Activated B cell treated with CpG ODN at 0.5 μM for 24 hours (primary cell): ENCODE measurements at regions of chr10 and their contacts with region 1.

Region 1: DNA sequence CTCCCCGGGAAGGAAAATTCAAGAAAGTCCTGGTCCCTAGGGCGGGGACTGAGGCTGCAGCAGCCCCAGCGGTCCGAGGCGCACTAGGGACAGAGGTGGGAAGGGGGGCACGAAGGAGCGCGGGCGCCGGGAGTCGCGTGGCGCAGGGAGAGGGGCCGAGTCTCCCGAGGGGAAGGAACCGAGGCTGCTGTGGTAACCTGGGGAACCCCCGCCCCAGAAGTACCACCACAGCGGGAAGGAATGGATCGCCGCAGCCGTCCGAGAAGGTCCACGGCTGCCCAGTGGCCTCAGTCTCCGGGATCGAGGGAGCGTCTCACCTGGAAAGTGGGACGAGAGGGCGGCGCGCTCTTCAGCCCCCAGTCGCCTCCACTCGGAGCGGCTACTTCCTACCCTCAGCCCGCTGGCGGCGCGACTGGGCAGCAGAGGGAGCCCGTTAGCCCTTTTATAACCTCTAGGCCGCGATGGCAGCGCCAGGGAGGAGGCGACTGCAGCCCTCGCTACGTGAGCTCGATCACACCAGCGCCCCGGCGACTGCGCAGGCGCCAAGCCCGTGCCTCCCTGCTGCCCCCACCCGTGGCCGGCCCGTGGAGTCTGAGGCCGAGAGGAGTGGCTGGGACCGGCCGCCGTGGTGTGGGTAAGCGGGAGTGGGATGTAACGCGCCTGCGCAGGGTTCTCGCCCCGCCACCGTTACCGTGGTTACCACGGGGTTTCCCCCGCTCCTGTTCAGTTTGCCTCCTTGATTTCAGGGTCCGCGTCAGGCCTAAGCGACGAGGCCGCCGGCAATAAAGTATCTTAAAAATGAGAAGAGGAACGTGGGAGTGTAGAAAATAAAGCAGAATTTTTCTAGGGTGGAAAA is at the start of gene P4HA1:
- DNase-seq: peak; percentile 95
- ATAC-seq: peak; percentile 92
- H3K4me3 Mint-ChIP-seq: peak within 1 kb of the TSS; percentile 96
- H3K27ac Mint-ChIP-seq: peak within 1 kb of the TSS; percentile 88
- H3K4me1 Mint-ChIP-seq: peaks cover 30% of the 10 kb centered on the region
- H3K27me3 Mint-ChIP-seq: no peaks in the 10 kb centered on the region
- CTCF ChIP-seq: peak; percentile 23
- total RNA-seq, gene P4HA1: 19.8 and 20.5 TPM in 2 replicates

Region 2: GRCh38 chr10:72692057-72692910 is 404.4 kb before region 1 on chr10 and contains the start of gene MCU:
- CTCF ChIA-PET with region 1: no interaction called
- POLR2A ChIA-PET with region 1: no interaction called
- intact Hi-C with region 1: loop called (anchors 1 kb)
- DNase-seq: peak; percentile 90
- ATAC-seq: peak; percentile 96
- H3K4me3 Mint-ChIP-seq: peak within 1 kb of the TSS; percentile 90
- H3K27ac Mint-ChIP-seq: peak within 1 kb of the TSS; percentile 81
- H3K4me1 Mint-ChIP-seq: peaks cover 44% of the 10 kb centered on the region
- H3K27me3 Mint-ChIP-seq: no peaks in the 10 kb centered on the region
- CTCF ChIP-seq: no peak
- total RNA-seq, gene MCU: 13.8 and 15.5 TPM in 2 replicates

Region 3: DNA sequence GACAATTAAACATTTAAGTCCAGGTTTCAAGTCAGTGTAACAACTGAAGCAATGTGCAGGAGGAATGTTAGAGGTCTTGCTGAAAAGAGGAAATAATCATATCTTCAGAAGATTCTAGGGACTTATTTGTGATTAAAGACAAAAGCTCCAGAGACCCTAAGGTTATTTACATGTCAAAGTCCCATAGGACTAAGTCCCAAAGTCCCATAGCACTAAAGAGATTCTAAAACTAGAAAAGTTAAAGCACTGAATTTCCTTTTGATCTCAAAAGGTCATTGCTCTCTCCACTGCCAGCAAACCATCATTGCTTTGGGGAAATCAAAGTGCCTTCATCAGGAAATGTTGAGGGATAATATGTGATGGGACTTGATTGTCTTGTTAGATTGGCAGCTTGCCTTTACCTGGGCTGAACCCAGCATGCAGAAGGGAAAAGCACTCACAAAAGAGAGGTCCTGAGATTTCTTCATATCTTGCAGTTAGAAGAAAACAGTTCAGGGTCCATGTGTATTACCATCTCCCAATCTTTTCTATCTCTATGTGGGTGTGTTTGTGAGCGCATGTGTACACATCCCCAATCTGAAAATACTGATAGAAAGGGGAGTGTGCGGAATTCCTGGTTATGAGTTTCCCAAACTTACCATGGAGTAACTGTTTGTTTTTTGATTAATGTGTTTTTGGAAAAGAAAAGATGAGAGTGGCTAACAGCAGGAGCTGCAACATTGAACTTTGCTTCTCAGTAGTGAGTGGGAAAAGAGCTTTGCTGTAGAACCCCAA is 35.4 kb after region 1 on chr10:
- CTCF ChIA-PET with region 1: interaction called, 4 read pairs
- POLR2A ChIA-PET with region 1: interaction called, 22 read pairs
- intact Hi-C with region 1: loop called (anchors 1 kb)
- DNase-seq: no peak
- ATAC-seq: peak; percentile 78
- H3K4me3 Mint-ChIP-seq: peak overlapping the region; percentile 68
- H3K27ac Mint-ChIP-seq: peak overlapping the region; percentile 81
- H3K4me1 Mint-ChIP-seq: peaks cover 22% of the 10 kb centered on the region
- H3K27me3 Mint-ChIP-seq: no peaks in the 10 kb centered on the region
- CTCF ChIP-seq: no peak

Region 4: GRCh38 chr10:73246783-73247508 is 150.3 kb after region 1 on chr10 and contains the start of gene DNAJC9:
- CTCF ChIA-PET with region 1: no interaction called
- POLR2A ChIA-PET with region 1: interaction called, 16 read pairs
- intact Hi-C with region 1: loop called (anchors 1 kb)
- DNase-seq: peak; percentile 99
- ATAC-seq: peak; percentile 84
- H3K4me3 Mint-ChIP-seq: peak within 1 kb of the TSS; percentile 93
- H3K27ac Mint-ChIP-seq: peak within 1 kb of the TSS; percentile 93
- H3K4me1 Mint-ChIP-seq: peaks cover 56% of the 10 kb centered on the region
- H3K27me3 Mint-ChIP-seq: no peaks in the 10 kb centered on the region
- CTCF ChIP-seq: no peak
- total RNA-seq, gene DNAJC9: 22.8 and 24.4 TPM in 2 replicates

Region 5: DNA sequence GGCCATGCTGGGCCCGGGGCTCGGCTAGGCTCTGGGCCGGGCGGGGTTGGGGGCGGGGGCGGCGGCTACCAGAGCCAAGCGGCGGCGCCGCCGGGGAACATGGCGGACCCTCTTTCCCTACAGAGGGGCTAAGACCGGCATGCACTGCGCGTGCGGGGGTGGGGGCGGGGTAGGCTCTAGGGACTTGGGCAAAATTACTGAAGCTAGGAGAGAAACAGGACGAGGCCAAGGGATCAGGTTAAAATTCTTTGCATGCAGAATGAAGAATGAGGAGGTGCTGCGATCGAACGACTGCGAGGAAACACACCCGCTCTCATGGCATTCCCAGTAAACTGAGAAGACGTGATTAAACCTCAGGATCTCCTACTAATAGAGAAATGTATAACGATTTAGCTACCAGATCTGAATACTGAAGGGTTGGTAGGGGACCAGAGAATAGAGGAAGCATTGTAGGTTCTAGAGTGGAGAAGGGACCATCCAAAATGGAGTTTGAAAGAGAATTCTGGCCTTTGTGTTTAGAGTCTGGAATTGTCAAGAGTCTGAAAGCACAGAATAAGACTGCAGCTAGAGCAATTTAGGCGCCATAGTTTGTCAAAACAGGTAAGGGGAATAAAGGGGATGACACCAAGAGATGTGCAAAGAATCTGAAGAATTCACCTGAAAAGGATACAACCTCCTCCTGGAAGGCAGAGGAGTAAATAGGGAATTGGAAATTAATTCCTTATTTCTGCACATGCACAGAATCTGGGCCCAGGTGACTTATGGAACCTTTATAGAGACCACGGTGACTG is 399.4 kb after region 1 on chr10 and contains the start of gene PPP3CB:
- CTCF ChIA-PET with region 1: no interaction called
- POLR2A ChIA-PET with region 1: interaction called, 4 read pairs
- intact Hi-C with region 1: loop called (anchors 1 kb)
- DNase-seq: no peak
- ATAC-seq: peak; percentile 73
- H3K4me3 Mint-ChIP-seq: peak within 1 kb of the TSS; percentile 92
- H3K27ac Mint-ChIP-seq: peak within 1 kb of the TSS; percentile 96
- H3K4me1 Mint-ChIP-seq: peaks cover 52% of the 10 kb centered on the region
- H3K27me3 Mint-ChIP-seq: no peaks in the 10 kb centered on the region
- CTCF ChIP-seq: no peak
- total RNA-seq, gene PPP3CB: 41.4 and 43.3 TPM in 2 replicates